ENCODE measurements at regions of chr9 and their contacts with region 1.

Region 1: DNA sequence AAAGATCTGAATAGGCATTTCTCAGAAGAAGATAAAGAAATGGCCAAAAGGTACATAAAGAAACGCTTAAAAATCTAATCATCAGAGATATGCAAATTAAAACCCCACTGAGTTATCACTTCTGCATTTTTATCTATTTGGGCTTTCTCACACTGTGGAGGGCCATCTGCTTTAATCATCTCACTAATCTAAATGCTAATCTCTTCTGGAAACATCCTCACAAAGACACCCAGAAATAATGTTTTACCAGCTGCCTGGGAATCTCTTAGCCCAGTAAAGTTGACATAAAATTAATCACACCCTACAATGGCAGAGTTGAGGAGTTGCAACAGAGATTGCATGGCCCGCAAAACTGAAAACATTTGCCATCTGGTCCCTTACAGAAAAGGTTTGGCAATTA is 407.9 kb upstream of the CYLC2 start:
- DNase-seq: no peak
- H3K4me3 ChIP-seq: no peak overlapping the region
- H3K4me3 Mint-ChIP-seq: no peak overlapping the region
- H3K27ac Mint-ChIP-seq: no peak overlapping the region
- H3K4me1 ChIP-seq: no peaks in the 10 kb centered on the region
- H3K4me1 Mint-ChIP-seq: no peaks in the 10 kb centered on the region
- H3K27me3 ChIP-seq: no peaks in the 10 kb centered on the region
- H3K27me3 Mint-ChIP-seq: no peaks in the 10 kb centered on the region
- CTCF ChIP-seq: no peak

Region 2: GRCh38 chr9:102642651-102643050 is 55.4 kb after region 1 on chr9:
- CTCF ChIA-PET with region 1: no interaction called
- POLR2A ChIA-PET with region 1: no interaction called
- intact Hi-C with region 1: loop called (anchors 1 kb)
- DNase-seq: no peak
- H3K4me3 ChIP-seq: no peak overlapping the region
- H3K4me3 Mint-ChIP-seq: no peak overlapping the region
- H3K27ac Mint-ChIP-seq: no peak overlapping the region
- H3K4me1 ChIP-seq: no peaks in the 10 kb centered on the region
- H3K4me1 Mint-ChIP-seq: no peaks in the 10 kb centered on the region
- H3K27me3 ChIP-seq: no peaks in the 10 kb centered on the region
- H3K27me3 Mint-ChIP-seq: no peaks in the 10 kb centered on the region
- CTCF ChIP-seq: no peak